H1 (cell line): ENCODE measurements at regions of chr10 and their contacts with region 1.

Region 1: GRCh38 chr10:60237977-60238758 is 151.5 kb downstream of the ANK3 start:
- DNase-seq: peak in 1 of 2 experiments; percentile 10
- H3K4me3 ChIP-seq: no peak overlapping the region
- H3K27ac ChIP-seq: no peak overlapping the region
- H3K4me1 ChIP-seq: peaks cover 0 to 3% (median 0%) of the 10 kb centered on the region in 4 experiments; a peak in 3 of 7 replicates
- H3K27me3 ChIP-seq: no peaks in the 10 kb centered on the region
- CTCF ChIP-seq: peak; percentile 62 to 75 (median 64)
- EP300 ChIP-seq: no peak
- POLR2A ChIP-seq: no peak
- RAD21 ChIP-seq: peak; percentile 85 to 87

Region 2: GRCh38 chr10:60254776-60255175 is 16.6 kb after region 1 on chr10:
- CTCF ChIA-PET with region 1: interaction called, 13 read pairs
- POLR2A ChIA-PET with region 1: no interaction called
- DNase-seq: no peak
- H3K4me3 ChIP-seq: no peak overlapping the region
- H3K27ac ChIP-seq: no peak overlapping the region
- H3K4me1 ChIP-seq: peaks cover 0 to 6% (median 4%) of the 10 kb centered on the region in 4 experiments; a peak in 5 of 7 replicates
- H3K27me3 ChIP-seq: no peaks in the 10 kb centered on the region
- CTCF ChIP-seq: no peak
- EP300 ChIP-seq: no peak
- POLR2A ChIP-seq: no peak
- RAD21 ChIP-seq: no peak

Region 3: DNA sequence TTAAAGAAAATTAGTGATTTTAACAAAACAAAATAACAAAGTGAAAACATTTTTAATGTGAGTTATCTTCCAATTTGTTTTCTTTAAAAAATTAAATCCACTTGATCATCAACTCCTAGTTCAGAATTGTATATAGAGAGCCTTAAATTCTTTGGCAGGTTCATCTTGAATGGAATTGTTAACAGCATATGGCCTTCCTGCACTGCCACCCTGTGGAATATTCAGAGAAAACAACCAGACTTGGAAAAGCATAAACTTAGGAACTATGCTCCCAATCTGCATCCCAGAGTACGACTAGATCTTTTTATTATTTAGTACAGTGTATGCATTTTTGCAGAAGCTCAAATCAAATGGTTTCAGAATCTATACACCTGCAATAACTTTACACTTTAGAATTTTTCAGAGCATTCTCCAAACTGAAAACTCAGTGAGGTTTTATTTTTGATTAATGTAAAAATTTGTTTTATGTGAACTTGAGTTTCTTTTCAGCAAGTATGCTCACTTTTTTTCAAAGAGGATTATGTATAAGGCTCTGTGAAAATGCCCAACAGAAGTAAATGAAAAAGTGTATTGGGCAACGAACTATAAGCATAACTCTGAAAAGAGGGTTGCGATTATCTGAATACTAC is 196.4 kb after region 1 on chr10:
- CTCF ChIA-PET with region 1: interaction called, 49 read pairs
- POLR2A ChIA-PET with region 1: no interaction called
- DNase-seq: no peak
- H3K4me3 ChIP-seq: no peak overlapping the region
- H3K27ac ChIP-seq: no peak overlapping the region
- H3K4me1 ChIP-seq: peaks cover 0 to 2% (median 0%) of the 10 kb centered on the region in 4 experiments; a peak in 1 of 7 replicates
- H3K27me3 ChIP-seq: no peaks in the 10 kb centered on the region
- CTCF ChIP-seq: peak in 2 of 3 experiments; percentile 64 to 67; a peak in 3 of 4 replicates
- EP300 ChIP-seq: no peak
- POLR2A ChIP-seq: no peak
- RAD21 ChIP-seq: peak; percentile 94 to 95